ENCODE measurements at regions of chr2 and their contacts with region 1.

Region 1: DNA sequence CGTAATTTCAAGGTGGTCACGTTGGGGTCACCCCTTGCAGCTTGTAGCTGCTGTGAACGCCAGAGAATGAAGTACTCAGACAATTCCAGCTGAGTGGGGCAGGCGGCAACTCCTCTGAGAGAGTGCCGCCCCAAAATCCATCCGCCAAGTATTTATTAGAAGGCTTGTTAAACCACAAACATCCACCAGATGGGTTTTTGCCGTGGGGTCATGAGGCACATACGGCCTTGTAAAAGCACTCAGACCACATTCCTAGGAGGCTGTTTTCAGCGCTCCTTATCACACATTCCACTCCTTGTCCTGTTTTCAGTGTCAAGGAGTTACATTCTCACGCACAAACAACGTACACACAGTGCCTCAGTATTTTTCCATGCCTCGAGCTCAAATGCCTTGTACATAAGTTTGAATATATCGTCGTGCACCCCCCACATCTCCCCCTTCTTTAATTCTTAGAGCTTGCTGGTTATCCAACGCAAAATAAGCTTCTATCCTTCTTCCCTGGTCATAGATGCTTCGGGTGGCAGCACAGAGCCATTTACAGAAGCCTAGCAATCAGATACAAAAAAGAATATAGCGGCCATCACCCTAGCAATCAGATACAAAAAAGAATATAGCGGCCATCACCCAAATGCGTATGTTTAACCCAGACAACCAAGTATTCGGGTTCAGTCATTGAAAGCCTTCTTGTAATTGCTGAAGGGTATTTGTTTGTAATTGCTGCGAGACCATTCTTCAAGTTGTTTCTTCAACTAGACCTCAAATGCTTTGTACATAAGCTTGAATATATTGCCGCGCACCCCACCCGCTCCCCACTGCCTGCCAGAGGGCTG is 7.3 kb downstream of the ALPP start:
- DNase-seq: no peak
- H3K4me3 ChIP-seq: peak overlapping the region; percentile 55 to 65 (median 63)
- H3K27ac ChIP-seq: no peak overlapping the region
- H3K4me1 ChIP-seq: peaks cover 5 to 32% (median 15%) of the 10 kb centered on the region in 4 experiments
- H3K27me3 ChIP-seq: peaks cover 22 to 66% (median 66%) of the 10 kb centered on the region in 4 experiments
- CTCF ChIP-seq: no peak
- EP300 ChIP-seq: no peak
- POLR2A ChIP-seq: no peak
- RAD21 ChIP-seq: 0 out of 4 replicates have a peak, but pooled peaks of 1 of the 2 experiments have one; percentile 2

Region 2: GRCh38 chr2:232300894-232301387 is 84.9 kb before region 1 on chr2:
- CTCF ChIA-PET with region 1: no interaction called
- POLR2A ChIA-PET with region 1: no interaction called
- DNase-seq: no peak
- H3K4me3 ChIP-seq: no peak overlapping the region
- H3K27ac ChIP-seq: no peak overlapping the region
- H3K4me1 ChIP-seq: no peaks in the 10 kb centered on the region
- H3K27me3 ChIP-seq: no peaks in the 10 kb centered on the region
- CTCF ChIP-seq: no peak
- EP300 ChIP-seq: no peak
- POLR2A ChIP-seq: no peak
- RAD21 ChIP-seq: no peak

Region 3: DNA sequence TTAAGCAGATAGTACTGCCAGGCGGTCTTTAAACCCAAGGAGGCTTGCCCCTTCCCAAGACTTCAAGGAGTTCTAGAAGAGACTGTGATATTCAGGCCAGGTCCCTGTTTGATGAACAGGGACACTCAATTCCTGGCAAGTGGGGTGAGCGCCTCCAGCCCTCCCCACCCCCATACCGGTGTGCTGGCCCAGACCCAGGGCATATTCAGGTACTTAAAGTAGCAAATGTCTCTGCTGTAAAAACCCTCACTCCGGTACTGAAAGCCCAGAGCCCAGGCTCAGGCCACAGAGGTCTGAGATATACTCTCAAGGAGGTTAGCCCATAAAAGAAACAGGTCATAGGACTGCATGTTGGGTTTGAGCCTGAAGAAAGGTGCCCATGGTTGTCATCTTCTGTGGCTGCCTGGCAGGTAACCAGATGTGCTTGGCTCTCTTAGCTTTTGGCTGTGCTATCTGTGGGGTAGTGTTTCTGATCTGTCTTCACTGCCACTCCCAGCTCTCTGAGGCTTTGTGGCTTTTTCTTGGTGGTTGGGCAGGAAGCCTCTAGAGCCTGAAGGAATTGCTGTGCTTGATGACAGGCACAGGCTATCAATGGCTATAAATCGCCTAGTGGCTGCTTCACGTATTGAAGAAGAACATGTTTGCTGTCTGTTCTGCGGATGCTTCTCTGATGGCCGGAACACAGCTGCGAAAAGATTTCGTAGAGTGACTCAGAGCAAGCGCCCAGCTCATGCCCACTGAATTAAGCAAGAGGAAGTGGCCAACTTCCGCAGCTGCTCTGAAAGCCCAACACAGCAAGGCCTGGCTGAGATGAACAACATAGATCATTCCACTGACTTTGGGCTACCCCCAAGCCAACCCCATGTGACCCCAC is 70.6 kb before region 1 on chr2:
- CTCF ChIA-PET with region 1: no interaction called
- POLR2A ChIA-PET with region 1: no interaction called
- DNase-seq: no peak
- H3K4me3 ChIP-seq: no peak overlapping the region
- H3K27ac ChIP-seq: no peak overlapping the region; the same call in 1 of the 2 replicates
- H3K4me1 ChIP-seq: no peaks in the 10 kb centered on the region
- H3K27me3 ChIP-seq: no peaks in the 10 kb centered on the region
- CTCF ChIP-seq: peak in 1 of 3 experiments; percentile 32; a peak in 1 of 4 replicates
- EP300 ChIP-seq: no peak
- POLR2A ChIP-seq: no peak
- RAD21 ChIP-seq: no peak; a peak in 1 of 4 replicates

Region 4: GRCh38 chr2:232372231-232373208 is 13.4 kb before region 1 on chr2:
- CTCF ChIA-PET with region 1: interaction called, 14 read pairs
- POLR2A ChIA-PET with region 1: interaction called, 7 read pairs
- DNase-seq: no peak
- H3K4me3 ChIP-seq: no peak overlapping the region
- H3K27ac ChIP-seq: no peak overlapping the region
- H3K4me1 ChIP-seq: peaks cover 0 to 23% (median 11%) of the 10 kb centered on the region in 4 experiments; a peak in 6 of 7 replicates
- H3K27me3 ChIP-seq: no peaks in the 10 kb centered on the region
- CTCF ChIP-seq: no peak
- EP300 ChIP-seq: no peak
- POLR2A ChIP-seq: no peak
- RAD21 ChIP-seq: no peak

Measured in H1 (cell line).